ENCODE measurements at regions of chr9 and their contacts with region 1.

Region 1: DNA sequence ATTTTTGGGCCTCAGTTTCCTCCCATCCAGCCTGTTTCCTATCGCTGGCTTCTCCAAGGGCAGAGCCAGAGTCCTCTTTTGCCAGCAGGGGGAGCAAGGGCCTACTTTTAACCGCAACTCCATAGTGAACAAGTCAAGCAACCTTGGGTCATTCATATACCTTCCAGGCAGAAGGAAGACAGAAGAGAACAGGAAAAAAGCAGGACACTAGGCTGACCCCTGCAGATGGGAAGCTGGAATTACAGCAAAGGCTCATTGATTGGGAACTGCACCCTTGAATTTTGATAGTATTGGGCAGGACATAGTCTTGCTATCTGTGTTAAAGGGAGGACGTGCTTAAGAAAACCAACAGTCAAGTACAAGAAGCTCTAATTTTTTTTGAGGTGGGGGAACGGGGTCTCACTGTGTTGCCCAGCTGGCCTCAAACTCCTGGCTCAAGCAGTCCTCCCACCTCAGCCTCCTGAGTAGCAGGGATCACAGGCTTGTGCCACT is 30.1 kb downstream of the QRFP start:
- DNase-seq: peak; percentile 80
- H3K4me3 Mint-ChIP-seq: no peak overlapping the region
- H3K27ac Mint-ChIP-seq: no peak overlapping the region
- H3K4me1 Mint-ChIP-seq: peaks cover 8% of the 10 kb centered on the region
- H3K27me3 Mint-ChIP-seq: no peaks in the 10 kb centered on the region
- CTCF ChIP-seq: peak; percentile 77

Region 2: GRCh38 chr9:130707225-130707976 is 159.1 kb before region 1 on chr9:
- CTCF ChIA-PET with region 1: no interaction called
- intact Hi-C with region 1: loop called (anchors 2 kb)
- DNase-seq: peak; percentile 58
- H3K4me3 Mint-ChIP-seq: no peak overlapping the region
- H3K27ac Mint-ChIP-seq: no peak overlapping the region
- H3K4me1 Mint-ChIP-seq: no peaks in the 10 kb centered on the region
- H3K27me3 Mint-ChIP-seq: peaks cover 12% of the 10 kb centered on the region
- CTCF ChIP-seq: peak; percentile 34

Region 3: GRCh38 chr9:130770679-130771442 is 95.7 kb before region 1 on chr9:
- CTCF ChIA-PET with region 1: interaction called, 7 read pairs
- intact Hi-C with region 1: loop called (anchors 1 kb)
- DNase-seq: peak; percentile 11
- H3K4me3 Mint-ChIP-seq: no peak overlapping the region
- H3K27ac Mint-ChIP-seq: no peak overlapping the region
- H3K4me1 Mint-ChIP-seq: peaks cover 22% of the 10 kb centered on the region
- H3K27me3 Mint-ChIP-seq: no peaks in the 10 kb centered on the region
- CTCF ChIP-seq: peak; percentile 28

Region 4: DNA sequence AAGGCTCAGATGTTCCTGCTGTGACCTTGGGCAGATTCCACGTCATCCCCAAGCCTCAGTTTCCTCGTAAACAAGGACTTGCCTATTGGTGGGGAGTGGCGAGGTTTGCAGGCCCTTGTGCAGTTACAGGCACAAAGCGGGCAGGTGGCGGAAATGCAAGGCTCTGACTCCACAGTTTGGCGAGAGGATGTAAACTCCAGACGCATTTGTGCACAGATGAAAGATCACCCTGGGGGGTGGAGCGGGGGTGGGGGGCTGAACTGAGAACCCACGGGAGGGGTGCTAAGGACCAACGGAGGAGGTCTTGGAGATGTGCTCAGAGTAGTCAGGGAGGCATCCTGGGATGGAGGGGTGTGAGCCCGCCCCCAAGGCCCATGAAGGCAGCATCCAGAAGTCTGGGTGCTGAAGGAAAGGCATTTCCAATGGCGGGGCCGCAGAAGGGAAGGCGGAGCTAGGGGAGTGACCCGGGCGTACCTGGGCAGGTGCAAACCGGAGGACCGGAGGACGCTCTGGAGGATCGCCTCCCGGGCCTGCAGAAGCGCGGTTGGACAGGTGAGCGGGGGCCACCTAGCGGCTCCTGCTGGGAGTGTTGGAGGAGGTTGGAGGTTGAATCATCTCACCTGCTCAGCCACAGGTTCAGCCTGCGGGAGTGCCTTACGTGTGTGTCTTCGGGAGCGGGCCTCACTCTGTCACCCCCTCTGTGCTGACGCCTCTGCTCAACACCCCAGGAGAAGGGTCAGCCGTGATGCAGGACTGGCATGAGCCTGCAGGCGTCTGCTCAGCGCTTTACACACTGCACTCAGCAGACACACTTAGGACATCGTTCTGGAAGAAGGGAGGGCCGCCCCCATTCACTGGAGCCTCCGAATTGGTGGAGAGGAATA is 74.4 kb after region 1 on chr9:
- CTCF ChIA-PET with region 1: interaction called, 3 read pairs
- intact Hi-C with region 1: loop called (anchors 2 kb)
- DNase-seq: peak; percentile 90
- H3K4me3 Mint-ChIP-seq: peak overlapping the region; percentile 5
- H3K27ac Mint-ChIP-seq: no peak overlapping the region
- H3K4me1 Mint-ChIP-seq: peaks cover 11% of the 10 kb centered on the region
- H3K27me3 Mint-ChIP-seq: peaks cover 79% of the 10 kb centered on the region
- CTCF ChIP-seq: peak; percentile 70

Region 5: GRCh38 chr9:130997925-130998596 is 131.5 kb after region 1 on chr9:
- CTCF ChIA-PET with region 1: interaction called, 9 read pairs
- intact Hi-C with region 1: loop called (anchors 5 kb)
- DNase-seq: peak; percentile 75
- H3K4me3 Mint-ChIP-seq: no peak overlapping the region
- H3K27ac Mint-ChIP-seq: no peak overlapping the region
- H3K4me1 Mint-ChIP-seq: no peaks in the 10 kb centered on the region
- H3K27me3 Mint-ChIP-seq: peaks cover 53% of the 10 kb centered on the region
- CTCF ChIP-seq: peak; percentile 73

Region 6: GRCh38 chr9:131046581-131047202 is 180.2 kb after region 1 on chr9:
- CTCF ChIA-PET with region 1: interaction called, 5 read pairs
- intact Hi-C with region 1: loop called (anchors 5 kb)
- DNase-seq: peak; percentile 70
- H3K4me3 Mint-ChIP-seq: no peak overlapping the region
- H3K27ac Mint-ChIP-seq: no peak overlapping the region
- H3K4me1 Mint-ChIP-seq: no peaks in the 10 kb centered on the region
- H3K27me3 Mint-ChIP-seq: peaks cover 12% of the 10 kb centered on the region
- CTCF ChIP-seq: peak; percentile 79

Measured in Calu3 (cell line).